HEK293 (cell line): ENCODE measurements at regions of chr6 and their contacts with region 1.

Region 1: DNA sequence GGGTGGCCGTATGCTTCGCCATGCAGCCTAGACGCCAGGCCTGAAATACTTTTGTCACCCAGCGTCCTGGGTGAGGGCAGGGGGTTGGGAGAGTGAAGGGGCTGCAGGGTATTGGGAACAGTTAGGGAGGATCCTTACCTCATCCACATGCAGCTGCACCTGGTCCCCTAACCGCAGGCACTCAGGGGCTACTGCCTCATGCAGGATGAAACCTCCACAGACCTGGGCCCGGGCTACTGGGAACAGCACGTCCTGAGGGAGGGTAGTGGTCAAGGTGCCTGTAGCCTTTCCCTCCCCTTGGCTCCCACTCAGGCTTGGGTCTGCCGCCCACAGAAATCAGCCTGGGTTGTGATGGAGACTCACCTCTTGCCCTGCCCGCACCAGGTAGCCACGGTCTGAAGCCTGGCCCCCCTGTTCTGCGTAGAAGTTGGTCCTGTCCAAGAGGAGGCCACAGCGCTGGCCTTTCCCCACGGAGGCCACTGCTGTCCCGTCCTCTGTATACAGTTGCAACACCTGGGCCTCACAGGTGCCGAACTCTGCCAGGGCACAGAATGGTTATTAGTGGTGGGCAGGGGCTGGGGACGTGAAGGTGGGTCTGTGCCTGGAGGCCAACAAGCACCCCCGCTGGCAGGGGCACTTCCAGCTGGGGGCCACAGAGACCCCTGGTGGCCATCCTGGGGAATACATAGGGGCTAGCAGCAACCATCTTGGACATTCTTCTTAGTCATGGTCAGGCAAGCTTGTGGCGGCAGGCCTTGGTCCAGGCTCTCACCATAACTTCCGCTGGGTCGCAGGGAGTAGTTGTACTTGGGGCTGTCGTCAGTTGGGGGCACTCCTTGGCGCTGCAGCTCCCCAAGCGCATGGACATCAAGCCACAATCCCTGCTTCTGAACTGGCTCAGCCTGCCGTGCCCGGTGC is 8.6 kb downstream of the AARS2 start:
- H3K4me3 ChIP-seq: no peak overlapping the region
- H3K27ac ChIP-seq: no peak overlapping the region
- H3K4me1 ChIP-seq: no peaks in the 10 kb centered on the region
- CTCF ChIP-seq: peak; percentile 73

Region 2: DNA sequence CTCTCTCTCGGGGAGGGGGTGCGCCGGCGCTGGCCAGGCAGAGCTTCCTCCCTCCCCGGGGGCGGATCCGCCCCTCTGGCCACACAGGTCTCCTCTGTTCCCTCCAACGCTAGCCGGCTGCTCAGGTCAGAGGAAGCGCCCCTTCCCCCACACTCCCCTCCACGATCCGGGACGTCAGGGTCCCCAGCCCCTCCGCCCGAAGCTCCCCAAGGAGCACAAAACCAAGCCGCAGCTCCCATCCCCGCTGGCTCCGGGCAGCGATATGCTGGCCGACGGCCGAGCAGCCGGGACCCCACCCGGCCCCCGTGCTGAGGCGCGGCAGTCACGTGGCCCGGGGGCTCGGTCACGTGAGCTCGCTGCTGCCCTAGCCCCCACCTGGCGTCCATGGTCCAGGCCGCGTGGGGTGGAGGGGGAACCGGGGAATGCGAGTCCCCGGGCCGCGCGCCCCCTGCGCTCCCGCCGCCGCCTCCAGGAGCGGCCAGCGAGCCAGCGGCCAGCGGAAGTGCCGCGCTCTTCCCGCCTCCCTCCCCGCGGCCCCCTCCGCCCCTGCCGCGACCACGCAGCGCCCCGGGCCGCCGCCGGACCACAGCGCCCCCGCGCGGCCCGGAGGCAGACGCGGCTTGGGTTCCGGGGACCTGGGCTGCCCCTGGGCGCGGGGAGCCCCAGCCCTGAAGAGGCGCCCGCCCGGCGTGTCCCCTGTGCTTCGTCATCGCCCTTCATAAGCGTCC is 47.4 kb before region 1 on chr6 and contains the start of gene SLC35B2:
- CTCF ChIA-PET with region 1: interaction called, 11 read pairs
- POLR2A ChIA-PET with region 1: interaction called, 6 read pairs
- H3K4me3 ChIP-seq: peak within 1 kb of the TSS; percentile 82
- H3K27ac ChIP-seq: peak within 1 kb of the TSS; percentile 65; the same call in 1 of the 2 replicates
- H3K4me1 ChIP-seq: no peaks in the 10 kb centered on the region
- CTCF ChIP-seq: 0 out of 2 replicates have a peak, but pooled peaks have one; percentile 32

Region 3: DNA sequence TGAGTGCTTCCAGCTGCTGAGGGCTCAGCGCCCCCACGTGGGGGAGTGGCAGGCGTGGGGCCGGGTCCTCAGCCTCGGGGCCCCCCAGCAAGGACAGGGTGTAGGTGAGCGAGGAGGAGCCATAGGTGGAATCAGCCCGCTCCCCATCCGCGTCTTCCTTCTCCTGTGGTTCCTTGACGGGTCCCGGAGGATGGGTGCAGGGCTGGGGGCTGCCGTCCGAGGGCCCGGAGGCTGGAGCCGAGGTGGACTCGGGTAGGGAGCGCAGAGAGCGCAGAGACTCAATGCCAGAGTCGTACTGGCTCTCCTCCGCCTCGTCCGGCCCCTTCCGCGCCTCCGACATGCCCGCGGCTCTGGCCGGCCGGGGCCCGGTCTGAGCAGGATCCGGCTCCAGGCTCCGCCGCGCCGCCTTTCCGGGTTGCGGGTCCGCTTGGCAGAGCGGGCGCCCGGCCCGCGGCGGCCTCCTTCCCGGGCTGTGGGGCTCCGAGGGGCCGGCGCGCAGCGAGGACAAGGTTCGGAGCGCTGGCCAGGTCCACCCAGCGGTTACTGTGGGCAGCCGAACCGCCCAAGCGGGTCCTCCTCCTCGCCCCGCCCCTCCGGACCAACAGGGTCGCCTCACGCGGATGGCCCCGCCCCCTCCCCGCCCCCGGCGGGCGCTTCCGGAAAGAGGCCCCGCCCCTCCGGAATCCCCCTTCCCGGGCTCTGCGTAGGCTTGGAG is 39.4 kb before region 1 on chr6 and contains the start of gene NFKBIE:
- CTCF ChIA-PET with region 1: interaction called, 117 read pairs
- POLR2A ChIA-PET with region 1: interaction called, 14 read pairs
- H3K4me3 ChIP-seq: peak within 1 kb of the TSS; percentile 62
- H3K27ac ChIP-seq: peak within 1 kb of the TSS; percentile 76; the same call in 1 of the 2 replicates
- H3K4me1 ChIP-seq: peaks cover 4% of the 10 kb centered on the region; the same call in 1 of the 2 replicates
- CTCF ChIP-seq: peak; percentile 98

Region 4: DNA sequence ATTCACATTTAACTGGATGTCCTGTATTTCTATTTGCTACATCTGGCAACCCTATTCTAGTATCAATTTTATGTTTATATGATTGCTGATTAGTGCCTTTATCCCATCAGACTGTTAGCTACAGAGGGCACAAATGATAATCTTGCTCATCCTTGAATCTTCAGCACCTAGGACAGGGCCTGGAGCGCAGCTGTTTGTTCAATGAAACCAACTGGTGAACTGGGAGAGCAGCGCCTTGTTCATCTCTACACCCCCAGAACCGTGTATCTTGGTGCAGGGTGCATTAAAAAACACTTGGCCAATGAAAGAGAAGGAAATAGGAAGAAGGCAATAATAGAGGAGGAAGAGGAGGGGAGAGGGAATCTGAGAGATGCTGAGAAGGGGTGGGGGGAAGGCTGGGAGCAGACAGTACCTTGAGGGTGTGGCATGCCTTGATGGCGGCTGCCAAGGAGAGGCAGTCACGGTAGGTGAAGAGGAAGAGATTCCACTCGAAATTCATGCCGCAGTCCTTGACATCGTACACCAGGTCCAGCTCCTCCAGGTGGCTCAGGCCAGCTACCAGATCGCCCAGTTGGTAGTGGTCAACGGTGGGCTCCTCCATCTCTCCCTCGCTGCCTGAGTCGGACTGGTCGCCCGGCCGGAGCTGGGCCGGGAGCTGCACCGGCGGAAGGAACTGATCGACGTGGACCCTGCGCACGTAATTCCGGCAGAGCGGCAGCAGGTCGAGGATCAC is 18.8 kb before region 1 on chr6:
- CTCF ChIA-PET with region 1: interaction called, 12 read pairs
- POLR2A ChIA-PET with region 1: no interaction called
- H3K4me3 ChIP-seq: no peak overlapping the region
- H3K27ac ChIP-seq: no peak overlapping the region
- H3K4me1 ChIP-seq: no peaks in the 10 kb centered on the region
- CTCF ChIP-seq: no peak

Region 5: GRCh38 chr6:44291841-44292240 is 12.7 kb before region 1 on chr6:
- CTCF ChIA-PET with region 1: interaction called, 24 read pairs
- POLR2A ChIA-PET with region 1: interaction called, 20 read pairs
- H3K4me3 ChIP-seq: no peak overlapping the region
- H3K27ac ChIP-seq: no peak overlapping the region
- H3K4me1 ChIP-seq: no peaks in the 10 kb centered on the region
- CTCF ChIP-seq: no peak